ENCODE measurements at regions of chr1 and their contacts with region 1.

Region 1: GRCh38 chr1:89804642-89805237 is 16.1 kb upstream of the LRRC8D start:
- DNase-seq: peak; percentile 76 to 80
- H3K4me3 ChIP-seq: no peak overlapping the region
- H3K4me3 Mint-ChIP-seq: no peak overlapping the region
- H3K27ac Mint-ChIP-seq: no peak overlapping the region
- H3K4me1 ChIP-seq: peaks cover 28% of the 10 kb centered on the region
- H3K4me1 Mint-ChIP-seq: peaks cover 8% of the 10 kb centered on the region
- H3K27me3 ChIP-seq: no peaks in the 10 kb centered on the region
- H3K27me3 Mint-ChIP-seq: no peaks in the 10 kb centered on the region
- CTCF ChIP-seq: peak; percentile 75 to 77

Region 2: GRCh38 chr1:89781494-89782126 is 23.1 kb before region 1 on chr1:
- CTCF ChIA-PET with region 1: no interaction called
- POLR2A ChIA-PET with region 1: no interaction called
- intact Hi-C with region 1: no loop called
- DNase-seq: no peak
- H3K4me3 ChIP-seq: no peak overlapping the region
- H3K4me3 Mint-ChIP-seq: no peak overlapping the region
- H3K27ac Mint-ChIP-seq: no peak overlapping the region
- H3K4me1 ChIP-seq: no peaks in the 10 kb centered on the region
- H3K4me1 Mint-ChIP-seq: no peaks in the 10 kb centered on the region
- H3K27me3 ChIP-seq: no peaks in the 10 kb centered on the region
- H3K27me3 Mint-ChIP-seq: no peaks in the 10 kb centered on the region
- CTCF ChIP-seq: no peak

Region 3: DNA sequence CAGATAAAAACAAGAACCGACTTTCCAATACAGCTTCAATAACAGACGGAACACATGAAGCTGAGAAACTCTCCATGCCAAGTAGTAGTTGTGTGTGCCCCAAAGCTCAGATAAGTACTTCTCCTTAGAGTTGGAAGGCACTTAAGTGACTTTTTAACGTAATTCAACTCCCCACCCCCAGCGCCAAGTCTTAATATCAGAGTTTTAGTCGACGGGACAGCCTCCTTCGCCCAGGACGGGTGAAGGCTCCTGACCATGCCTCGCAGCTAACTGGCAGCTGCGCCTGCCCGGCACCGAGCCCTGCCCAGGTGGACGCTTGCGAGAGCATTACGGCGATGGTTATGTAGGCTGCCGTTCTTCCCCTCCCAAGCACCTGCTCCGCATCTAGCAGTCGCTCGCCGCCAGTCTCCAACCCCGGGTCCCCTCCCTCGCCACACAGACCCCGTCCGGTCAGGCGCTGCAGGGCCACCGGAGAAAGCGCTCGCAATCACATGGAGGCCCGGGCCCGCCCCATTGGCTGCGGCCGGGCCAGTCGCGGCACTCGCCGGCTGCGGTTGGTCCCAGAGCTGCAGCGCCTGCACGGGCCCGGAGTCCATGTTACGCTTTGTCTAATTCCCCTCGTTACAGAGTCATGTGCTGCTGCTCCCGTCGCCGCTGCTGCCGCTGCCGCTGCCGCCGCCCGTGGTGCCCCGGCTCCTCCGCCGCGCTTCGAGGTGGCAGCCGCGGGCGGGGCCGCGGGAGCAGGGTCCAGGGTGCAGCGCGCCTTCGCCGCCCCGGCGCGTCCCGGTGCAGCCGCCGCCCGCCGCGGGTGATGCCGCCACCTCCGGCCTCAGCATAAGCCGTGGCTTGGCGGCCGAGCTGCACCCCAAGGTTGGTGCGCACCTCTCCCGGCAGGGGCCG is 15.9 kb after region 1 on chr1 and contains the start of gene LRRC8D:
- CTCF ChIA-PET with region 1: interaction called, 7 read pairs
- POLR2A ChIA-PET with region 1: interaction called, 20 read pairs
- intact Hi-C with region 1: loop called (anchors 1 kb)
- DNase-seq: peak; percentile 83 to 87
- H3K4me3 ChIP-seq: peak within 1 kb of the TSS; percentile 82
- H3K4me3 Mint-ChIP-seq: peak within 1 kb of the TSS; percentile 92
- H3K27ac Mint-ChIP-seq: peak within 1 kb of the TSS; percentile 90
- H3K4me1 ChIP-seq: peaks cover 14% of the 10 kb centered on the region
- H3K4me1 Mint-ChIP-seq: peaks cover 22% of the 10 kb centered on the region
- H3K27me3 ChIP-seq: no peaks in the 10 kb centered on the region
- H3K27me3 Mint-ChIP-seq: no peaks in the 10 kb centered on the region
- CTCF ChIP-seq: no peak
- total RNA-seq, gene LRRC8D: 34.4 and 39.4 TPM in 2 replicates

Region 4: DNA sequence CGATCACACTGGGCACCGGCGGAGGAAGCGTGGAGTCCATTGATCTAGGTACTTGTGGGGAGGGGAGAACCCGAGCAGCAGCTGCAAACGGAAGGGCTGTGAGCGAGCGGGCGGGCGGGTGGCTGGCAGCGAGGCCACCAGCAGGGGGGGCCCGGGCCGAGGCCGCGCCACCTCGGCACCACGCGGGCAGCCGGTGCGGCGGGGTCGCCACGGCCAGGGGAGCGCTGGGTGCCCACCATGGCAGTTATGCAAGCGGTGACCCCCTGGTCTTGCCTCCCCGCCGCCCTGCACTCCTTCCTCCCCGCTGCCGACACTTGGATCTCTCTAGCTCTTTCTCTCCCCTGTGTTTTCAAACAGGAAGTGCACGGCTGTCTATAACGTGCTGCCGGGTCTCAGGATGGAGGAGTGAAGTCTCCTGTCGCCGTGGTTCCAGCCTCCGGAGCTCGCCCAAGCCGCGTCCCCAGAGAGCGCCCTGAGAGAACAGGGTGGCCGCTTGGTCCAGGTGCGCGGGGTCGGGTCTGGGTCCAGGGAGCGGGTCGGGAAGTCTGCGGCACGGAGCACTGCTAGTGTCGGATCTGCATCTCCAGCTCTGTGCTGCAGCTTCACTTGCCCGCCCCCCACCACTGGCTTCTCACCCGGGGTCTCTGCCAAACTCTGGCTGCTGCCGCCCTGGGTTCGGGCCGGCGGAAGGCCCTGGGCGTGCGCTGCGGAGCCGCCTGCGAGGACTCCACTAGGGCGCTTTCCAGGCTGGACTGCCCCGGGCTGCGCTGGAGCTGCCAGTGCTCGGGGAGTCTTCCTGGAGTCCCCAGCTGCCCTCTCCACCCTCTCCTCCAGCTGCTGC is 38.8 kb after region 1 on chr1:
- CTCF ChIA-PET with region 1: interaction called, 4 read pairs
- POLR2A ChIA-PET with region 1: no interaction called
- intact Hi-C with region 1: loop called (anchors 1 kb)
- DNase-seq: peak; percentile 68 to 73
- H3K4me3 ChIP-seq: peak overlapping the region; percentile 70
- H3K4me3 Mint-ChIP-seq: peak overlapping the region; percentile 84
- H3K27ac Mint-ChIP-seq: peak overlapping the region; percentile 67
- H3K4me1 ChIP-seq: peaks cover 6% of the 10 kb centered on the region; the same call in 1 of the 2 replicates
- H3K4me1 Mint-ChIP-seq: peaks cover 16% of the 10 kb centered on the region
- H3K27me3 ChIP-seq: no peaks in the 10 kb centered on the region
- H3K27me3 Mint-ChIP-seq: no peaks in the 10 kb centered on the region
- CTCF ChIP-seq: peak; percentile 32 to 55

Region 5: GRCh38 chr1:89908672-89909436 is 104.1 kb after region 1 on chr1:
- CTCF ChIA-PET with region 1: no interaction called
- POLR2A ChIA-PET with region 1: no interaction called
- intact Hi-C with region 1: loop called (anchors 10 kb)
- DNase-seq: no peak
- H3K4me3 ChIP-seq: no peak overlapping the region
- H3K4me3 Mint-ChIP-seq: no peak overlapping the region
- H3K27ac Mint-ChIP-seq: no peak overlapping the region
- H3K4me1 ChIP-seq: peaks cover 55% of the 10 kb centered on the region
- H3K4me1 Mint-ChIP-seq: peaks cover 17% of the 10 kb centered on the region
- H3K27me3 ChIP-seq: no peaks in the 10 kb centered on the region
- H3K27me3 Mint-ChIP-seq: no peaks in the 10 kb centered on the region
- CTCF ChIP-seq: no peak

Region 6: DNA sequence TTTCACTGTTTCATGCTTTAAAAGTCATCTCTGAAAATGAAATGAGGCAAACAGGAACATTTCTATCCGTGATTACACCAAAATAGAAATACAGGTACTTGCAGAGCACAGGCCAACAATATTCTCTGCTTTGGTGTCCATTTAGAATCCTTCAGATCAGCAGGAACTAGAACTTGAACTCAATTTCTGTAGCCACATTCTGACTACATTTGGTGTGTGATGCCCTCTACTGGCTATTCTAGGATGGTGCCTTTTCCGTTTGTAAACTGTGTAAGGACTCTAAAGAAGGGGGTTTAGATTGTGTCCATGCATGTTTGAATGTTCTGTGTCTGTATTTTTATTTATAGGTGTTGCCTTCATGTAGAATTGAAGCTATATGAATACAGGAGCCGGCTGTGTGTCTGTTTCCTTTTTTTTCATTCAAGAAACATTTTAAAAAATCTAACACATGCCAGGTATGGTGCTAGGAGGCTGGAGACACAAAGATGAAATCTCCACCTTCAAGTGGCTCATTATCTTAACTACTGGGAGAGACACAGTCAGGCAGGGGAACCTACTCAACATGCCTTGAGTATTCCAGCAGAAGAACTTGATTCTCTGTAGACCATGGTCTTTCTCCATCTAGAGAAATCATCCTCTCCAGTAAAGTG is 182.6 kb after region 1 on chr1:
- CTCF ChIA-PET with region 1: no interaction called
- POLR2A ChIA-PET with region 1: no interaction called
- intact Hi-C with region 1: loop called (anchors 1 kb)
- DNase-seq: peak in 1 of 2 experiments; percentile 50
- H3K4me3 ChIP-seq: no peak overlapping the region
- H3K4me3 Mint-ChIP-seq: no peak overlapping the region
- H3K27ac Mint-ChIP-seq: no peak overlapping the region
- H3K4me1 ChIP-seq: peaks cover 35% of the 10 kb centered on the region
- H3K4me1 Mint-ChIP-seq: peaks cover 30% of the 10 kb centered on the region
- H3K27me3 ChIP-seq: no peaks in the 10 kb centered on the region
- H3K27me3 Mint-ChIP-seq: no peaks in the 10 kb centered on the region
- CTCF ChIP-seq: peak; percentile 63 to 71

Measured in Caco-2 (cell line).